ENCODE measurements at regions of chr13 and their contacts with region 1.

Region 1: DNA sequence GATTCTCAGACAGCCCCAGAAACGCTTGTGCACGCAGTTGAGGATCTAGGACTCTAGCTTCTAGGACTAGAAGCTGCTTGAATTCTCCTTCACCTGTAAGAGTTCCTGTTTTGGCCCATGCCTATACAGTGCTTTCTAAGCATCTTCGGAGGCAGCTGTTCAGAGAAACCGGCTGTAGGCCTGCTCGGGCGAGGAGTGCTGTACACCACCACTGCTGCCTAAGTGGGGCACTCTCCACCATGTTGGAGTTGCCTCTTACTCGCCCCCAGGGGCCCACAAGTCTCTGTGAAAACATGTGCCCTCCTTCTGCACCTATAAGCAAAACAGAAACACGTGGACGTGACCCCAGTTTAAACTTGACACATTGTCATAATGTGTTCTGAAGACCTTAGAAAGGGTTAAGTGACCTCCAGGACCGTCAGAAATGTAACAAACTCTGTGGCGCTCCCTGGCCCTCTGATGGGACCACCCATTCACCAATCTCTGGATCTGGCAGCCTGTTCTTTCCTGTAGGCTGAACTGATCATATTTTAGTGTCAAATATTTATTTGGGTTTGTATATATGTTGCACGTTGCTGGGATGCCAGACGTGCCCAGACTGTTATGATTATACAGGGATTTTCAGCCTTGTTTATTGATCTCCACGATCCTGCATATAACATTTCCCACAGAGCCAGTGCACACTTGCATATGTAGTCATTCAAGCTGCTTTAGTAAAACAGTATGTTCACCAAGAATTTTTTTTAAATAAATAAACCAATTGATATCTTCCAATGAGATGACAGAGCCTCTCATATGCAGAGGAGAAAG is 60.8 kb downstream of the C13orf42 start:
- DNase-seq: peak; percentile 40
- ATAC-seq: peak; percentile 91
- H3K4me3 ChIP-seq: no peak overlapping the region
- H3K27ac ChIP-seq: no peak overlapping the region
- H3K4me1 ChIP-seq: peaks cover 5% of the 10 kb centered on the region; the same call in 1 of the 2 replicates
- H3K27me3 ChIP-seq: peaks cover 45% of the 10 kb centered on the region
- CTCF ChIP-seq: no peak
- POLR2A ChIP-seq: no peak
- RAD21 ChIP-seq: no peak

Region 2: DNA sequence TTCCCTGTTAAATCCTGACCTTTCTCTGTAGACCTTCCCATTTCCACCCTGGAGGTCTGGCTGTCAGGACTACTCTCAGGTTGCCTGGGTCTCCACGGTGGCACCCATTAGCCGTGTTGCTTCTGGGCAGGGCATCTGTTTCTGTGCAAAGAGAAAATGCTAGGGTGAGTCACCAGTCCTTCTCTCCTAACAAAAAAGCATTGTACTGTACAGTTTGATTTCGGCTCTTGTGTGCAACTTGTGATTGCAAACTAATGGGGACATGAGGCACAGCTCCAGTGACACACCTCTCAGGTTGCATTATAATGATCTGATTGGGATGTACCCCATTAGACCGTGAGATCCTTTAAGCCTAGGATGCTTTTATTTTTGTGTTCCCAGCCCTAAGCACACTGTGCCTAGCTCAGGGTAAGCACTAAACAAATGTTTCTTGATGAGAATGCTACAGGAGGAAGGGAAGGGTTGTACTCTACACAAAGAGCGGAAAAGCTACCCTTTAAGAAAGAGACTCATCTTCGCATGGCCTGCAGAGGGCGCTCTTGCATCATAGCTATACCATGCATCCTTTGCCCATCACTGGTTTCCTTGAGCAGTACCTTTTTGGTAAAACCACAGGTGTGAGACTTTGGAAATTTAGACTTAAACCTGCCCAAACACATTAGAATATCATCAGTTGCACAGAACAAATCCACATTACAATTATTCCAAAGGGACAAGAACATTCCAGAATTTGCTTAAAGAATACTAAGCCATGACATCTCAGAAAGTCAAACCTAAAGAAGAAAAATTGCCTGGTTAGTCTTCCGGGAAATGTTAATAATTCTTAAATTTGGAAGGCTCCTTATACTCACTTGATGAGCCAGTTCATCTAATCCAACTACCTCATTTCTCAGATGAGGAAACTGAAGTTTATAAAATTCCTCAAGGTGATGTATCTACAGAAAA is 1073.6 kb before region 1 on chr13:
- CTCF ChIA-PET with region 1: no interaction called
- POLR2A ChIA-PET with region 1: no interaction called
- dilution Hi-C with region 1: no loop called
- in situ Hi-C with region 1: no loop called
- intact Hi-C with region 1: loop called (anchors 5 kb)
- DNase-seq: peak; percentile 70
- ATAC-seq: peak; percentile 86
- H3K4me3 ChIP-seq: no peak overlapping the region
- H3K27ac ChIP-seq: no peak overlapping the region
- H3K4me1 ChIP-seq: peaks cover 4% of the 10 kb centered on the region
- H3K27me3 ChIP-seq: no peaks in the 10 kb centered on the region
- CTCF ChIP-seq: peak; percentile 86
- POLR2A ChIP-seq: no peak
- RAD21 ChIP-seq: peak; percentile 94

Measured in IMR-90 (cell line).